Lower lobe of right lung (tissue), 2 donors: ENCODE measurements at regions of chr16 and their contacts with region 1.

Region 1: DNA sequence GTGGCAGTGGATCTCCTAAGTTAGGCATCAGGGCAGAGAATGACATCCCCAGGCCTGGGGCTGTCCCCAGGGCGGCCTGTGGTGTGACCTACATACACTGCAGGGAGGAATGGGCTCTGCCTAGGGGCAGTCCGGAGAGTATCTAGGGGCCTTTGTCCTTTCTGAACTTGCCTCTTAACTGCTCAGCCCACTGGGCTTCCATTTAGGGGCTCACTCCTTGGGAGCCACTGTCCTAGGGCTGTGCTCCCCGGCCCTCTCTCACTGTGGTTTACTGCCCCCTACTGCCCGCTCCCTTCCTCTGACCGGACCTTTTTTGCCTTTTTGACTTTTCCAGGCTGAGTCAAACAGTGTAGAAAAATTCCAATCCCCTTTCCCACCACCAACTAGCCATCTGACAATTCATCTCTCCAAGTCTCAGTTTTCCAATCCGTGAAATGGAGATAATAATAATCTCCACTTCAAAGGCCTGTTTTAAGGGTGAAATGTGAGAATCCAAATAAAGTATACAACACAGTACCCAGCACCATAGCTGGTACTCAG is 66.8 kb downstream of the DNAH3 start:
- DNase-seq: peak; percentile 65
- ATAC-seq: peak; percentile 89 to 91
- H3K4me3 ChIP-seq: no peak overlapping the region
- H3K27ac ChIP-seq: no peak overlapping the region
- H3K4me1 ChIP-seq: no peaks in the 10 kb centered on the region
- H3K27me3 ChIP-seq: no peaks in the 10 kb centered on the region
- CTCF ChIP-seq: peak; percentile 75

Region 2: DNA sequence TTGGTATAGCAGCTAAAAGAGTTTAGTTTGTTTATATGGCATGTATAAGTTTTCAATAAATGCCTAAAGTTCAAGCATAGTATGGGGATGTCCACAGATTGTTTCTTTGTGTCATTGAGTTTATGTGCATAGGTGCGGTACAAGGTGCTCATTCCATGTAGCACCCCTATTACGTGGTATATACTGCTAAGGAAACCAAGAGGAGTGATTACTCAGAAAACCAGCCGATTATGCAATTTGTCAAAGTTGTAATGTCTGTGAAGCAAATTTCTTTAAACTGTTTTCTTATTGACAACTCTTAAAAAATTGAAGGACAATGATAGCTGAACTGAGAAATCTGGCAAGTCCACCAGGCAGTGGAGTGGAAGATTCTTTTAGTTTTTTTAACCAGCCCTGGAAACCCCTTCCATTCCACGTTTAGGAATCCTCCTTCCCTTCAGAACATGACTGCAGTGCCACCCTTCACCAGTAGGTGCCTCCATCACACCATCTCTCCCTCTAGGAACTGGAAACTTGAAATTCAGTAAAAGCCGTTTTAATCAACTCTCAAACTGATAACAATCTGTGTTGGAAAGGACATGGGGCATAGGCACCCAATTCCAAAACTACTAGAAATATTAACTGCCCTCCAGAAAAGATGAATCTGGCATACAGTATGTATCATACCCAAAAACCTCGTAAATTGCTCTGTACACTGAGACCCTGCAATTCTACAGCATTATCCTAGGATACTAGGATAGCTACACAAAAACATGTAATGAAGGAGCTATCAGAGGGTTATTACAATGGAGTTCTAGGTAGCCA is 234.0 kb before region 1 on chr16:
- intact Hi-C with region 1: loop called (anchors 10 kb)
- DNase-seq: peak; percentile 67
- ATAC-seq: peak; percentile 64 to 82
- H3K4me3 ChIP-seq: no peak overlapping the region
- H3K27ac ChIP-seq: peak overlapping the region; percentile 76
- H3K4me1 ChIP-seq: peaks cover 52% of the 10 kb centered on the region
- H3K27me3 ChIP-seq: no peaks in the 10 kb centered on the region
- CTCF ChIP-seq: peak; percentile 98

Region 3: GRCh38 chr16:21001262-21001661 is 82.5 kb before region 1 on chr16:
- intact Hi-C with region 1: no loop called
- DNase-seq: no peak
- ATAC-seq: peak; percentile 54 to 64
- H3K4me3 ChIP-seq: no peak overlapping the region
- H3K27ac ChIP-seq: no peak overlapping the region
- H3K4me1 ChIP-seq: no peaks in the 10 kb centered on the region
- H3K27me3 ChIP-seq: no peaks in the 10 kb centered on the region
- CTCF ChIP-seq: peak; percentile 43